ENCODE measurements at regions of chr9 and their contacts with region 1.

Region 1: DNA sequence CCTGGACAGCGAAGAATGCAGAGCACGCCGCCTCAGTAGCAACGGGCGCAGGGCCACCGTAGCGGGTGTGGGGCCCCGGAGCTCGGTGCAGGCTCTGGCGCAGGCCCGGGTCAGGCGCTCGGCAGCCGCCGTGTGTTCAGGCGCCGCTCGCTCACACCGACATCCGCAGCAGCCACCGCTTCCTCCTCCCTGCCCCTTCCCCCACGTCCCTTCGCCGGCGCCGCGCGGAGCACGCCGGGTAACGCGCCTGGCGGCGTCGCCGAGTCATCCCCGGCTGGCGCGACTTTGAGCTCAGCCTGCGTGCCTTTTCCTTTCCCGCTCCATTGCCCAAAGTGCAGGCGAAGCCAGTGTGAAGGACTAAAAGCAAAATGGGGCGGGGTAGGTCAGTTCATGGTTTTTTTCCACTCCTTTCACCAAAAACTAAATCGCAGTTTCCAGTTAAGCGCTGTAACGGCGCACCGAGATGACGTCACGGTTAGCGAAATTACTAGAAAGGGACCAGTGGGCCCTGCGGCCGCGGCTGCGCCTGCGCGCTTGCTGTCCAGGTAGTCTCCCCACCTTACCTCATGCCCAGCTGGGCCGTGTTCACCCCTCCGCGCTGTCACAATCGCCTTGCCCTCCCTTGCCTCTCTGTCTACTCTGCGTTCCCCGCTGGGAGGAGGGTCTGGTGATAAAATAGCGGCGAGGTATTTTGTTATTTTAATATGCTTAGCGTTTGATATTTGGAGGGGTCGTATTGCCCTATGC is at the start of gene UBQLN1:
- DNase-seq: peak; percentile 86 to 96 (median 93)
- H3K4me3 ChIP-seq: peak within 1 kb of the TSS; percentile 99
- H3K4me3 Mint-ChIP-seq: peak within 1 kb of the TSS; percentile 84 to 99 (median 98)
- H3K27ac ChIP-seq: peak within 1 kb of the TSS; percentile 99
- H3K27ac Mint-ChIP-seq: peak within 1 kb of the TSS; percentile 98 to 100 (median 100)
- H3K4me1 ChIP-seq: peaks cover 34% of the 10 kb centered on the region
- H3K4me1 Mint-ChIP-seq: peaks cover 36 to 53% (median 50%) of the 10 kb centered on the region in 3 donors
- H3K27me3 ChIP-seq: no peaks in the 10 kb centered on the region
- H3K27me3 Mint-ChIP-seq: no peaks in the 10 kb centered on the region
- total RNA-seq, gene UBQLN1: 95.1 to 101 TPM

Region 2: GRCh38 chr9:83583151-83584014 is 124.6 kb before region 1 on chr9:
- CTCF ChIA-PET with region 1: no interaction called
- POLR2A ChIA-PET with region 1: no interaction called
- DNase-seq: peak in 2 of 5 donors; percentile 14 to 16
- H3K4me3 ChIP-seq: no peak overlapping the region
- H3K4me3 Mint-ChIP-seq: no peak overlapping the region
- H3K27ac ChIP-seq: no peak overlapping the region
- H3K27ac Mint-ChIP-seq: peak overlapping the region in 1 of 8 donors; percentile 7
- H3K4me1 ChIP-seq: no peaks in the 10 kb centered on the region
- H3K4me1 Mint-ChIP-seq: no peaks in the 10 kb centered on the region
- H3K27me3 ChIP-seq: no peaks in the 10 kb centered on the region
- H3K27me3 Mint-ChIP-seq: no peaks in the 10 kb centered on the region

Region 3: GRCh38 chr9:83622939-83623678 is 84.8 kb before region 1 on chr9 and contains the start of gene IDNK:
- CTCF ChIA-PET with region 1: interaction called, 22 read pairs
- POLR2A ChIA-PET with region 1: interaction called, 22 read pairs
- DNase-seq: peak; percentile 49 to 76 (median 60)
- H3K4me3 ChIP-seq: peak within 1 kb of the TSS; percentile 72
- H3K4me3 Mint-ChIP-seq: peak within 1 kb of the TSS; percentile 87 to 98 (median 92)
- H3K27ac ChIP-seq: peak within 1 kb of the TSS; percentile 84
- H3K27ac Mint-ChIP-seq: peak within 1 kb of the TSS; percentile 90 to 99 (median 96)
- H3K4me1 ChIP-seq: peaks cover 18% of the 10 kb centered on the region
- H3K4me1 Mint-ChIP-seq: peaks cover 33 to 43% (median 36%) of the 10 kb centered on the region in 3 donors
- H3K27me3 ChIP-seq: no peaks in the 10 kb centered on the region
- H3K27me3 Mint-ChIP-seq: no peaks in the 10 kb centered on the region
- total RNA-seq, gene IDNK: 5.9 to 6.3 TPM

Region 4: DNA sequence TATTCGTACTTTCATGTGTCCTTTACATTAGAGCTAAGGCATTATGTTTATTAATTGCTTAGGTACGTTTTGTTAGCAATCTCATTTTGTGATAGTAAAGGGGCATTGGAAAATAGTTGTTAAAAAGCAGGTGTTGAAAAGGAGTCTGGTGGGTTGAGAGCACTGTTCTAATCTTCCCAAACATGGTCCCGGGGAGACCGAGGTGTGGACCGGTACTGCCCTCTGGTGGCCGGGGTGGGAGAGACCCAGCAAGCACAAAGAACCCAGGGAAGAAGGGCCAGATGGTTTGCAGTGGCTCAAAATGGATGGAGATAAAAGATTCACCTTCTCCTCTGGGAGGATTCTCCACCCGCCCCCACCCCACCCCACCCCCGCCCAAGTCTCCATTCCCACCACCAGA is 58.9 kb before region 1 on chr9:
- CTCF ChIA-PET with region 1: interaction called, 11 read pairs
- POLR2A ChIA-PET with region 1: no interaction called
- DNase-seq: peak; percentile 57 to 79 (median 65)
- H3K4me3 ChIP-seq: no peak overlapping the region
- H3K4me3 Mint-ChIP-seq: no peak overlapping the region
- H3K27ac ChIP-seq: no peak overlapping the region
- H3K27ac Mint-ChIP-seq: peak overlapping the region in 1 of 8 donors; percentile 24
- H3K4me1 ChIP-seq: no peaks in the 10 kb centered on the region
- H3K4me1 Mint-ChIP-seq: no peaks in the 10 kb centered on the region
- H3K27me3 ChIP-seq: no peaks in the 10 kb centered on the region
- H3K27me3 Mint-ChIP-seq: no peaks in the 10 kb centered on the region

Region 5: DNA sequence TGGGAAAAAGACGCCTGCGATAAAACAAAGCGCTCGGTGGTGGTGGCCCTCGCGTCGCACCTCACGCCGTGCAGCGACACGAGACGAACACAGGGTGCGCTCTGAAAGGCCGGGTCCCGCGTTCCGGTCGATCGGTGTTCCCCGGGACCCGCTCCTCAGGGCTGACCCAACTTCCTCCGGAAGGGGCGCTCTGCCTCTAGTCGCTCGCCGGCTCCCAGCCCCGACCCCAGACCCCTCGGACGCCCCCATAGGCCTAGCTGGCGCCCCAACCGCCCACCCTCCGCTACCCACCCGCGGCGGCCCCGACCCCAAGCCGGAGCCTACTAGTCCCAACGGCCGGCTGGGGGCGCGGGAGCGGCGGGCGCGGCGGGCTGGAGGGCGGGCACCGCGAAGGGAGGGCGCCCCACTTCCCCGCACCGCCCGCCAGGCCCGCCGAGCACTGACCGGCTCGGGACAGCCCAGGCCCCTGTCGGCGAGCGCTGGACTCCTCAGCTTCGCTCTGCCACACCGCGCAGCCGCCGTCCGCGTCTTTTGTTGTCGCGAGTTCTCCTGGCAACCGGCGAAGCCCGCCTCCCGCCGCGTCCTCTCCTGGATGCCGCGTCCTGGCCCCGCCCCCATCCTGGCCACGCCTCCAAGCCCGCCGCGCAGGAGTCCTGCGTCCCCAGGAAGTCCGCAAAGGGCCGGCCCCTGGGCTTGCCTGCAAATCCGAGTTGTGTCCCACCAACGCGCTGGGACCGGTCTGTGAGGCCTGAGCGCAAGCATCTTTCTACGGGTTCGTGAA is 213.2 kb after region 1 on chr9 and contains the start of gene KIF27:
- CTCF ChIA-PET with region 1: no interaction called
- POLR2A ChIA-PET with region 1: interaction called, 20 read pairs
- DNase-seq: peak; percentile 94 to 98 (median 95)
- H3K4me3 ChIP-seq: peak within 1 kb of the TSS; percentile 48
- H3K4me3 Mint-ChIP-seq: peak within 1 kb of the TSS; percentile 89 to 96 (median 92)
- H3K27ac ChIP-seq: peak within 1 kb of the TSS; percentile 87
- H3K27ac Mint-ChIP-seq: peak within 1 kb of the TSS; percentile 95 to 98 (median 97)
- H3K4me1 ChIP-seq: no peaks in the 10 kb centered on the region
- H3K4me1 Mint-ChIP-seq: peaks cover 14 to 25% (median 16%) of the 10 kb centered on the region in 3 donors
- H3K27me3 ChIP-seq: no peaks in the 10 kb centered on the region
- H3K27me3 Mint-ChIP-seq: no peaks in the 10 kb centered on the region
- total RNA-seq, gene KIF27: 2.8 to 3.2 TPM

Region 6: DNA sequence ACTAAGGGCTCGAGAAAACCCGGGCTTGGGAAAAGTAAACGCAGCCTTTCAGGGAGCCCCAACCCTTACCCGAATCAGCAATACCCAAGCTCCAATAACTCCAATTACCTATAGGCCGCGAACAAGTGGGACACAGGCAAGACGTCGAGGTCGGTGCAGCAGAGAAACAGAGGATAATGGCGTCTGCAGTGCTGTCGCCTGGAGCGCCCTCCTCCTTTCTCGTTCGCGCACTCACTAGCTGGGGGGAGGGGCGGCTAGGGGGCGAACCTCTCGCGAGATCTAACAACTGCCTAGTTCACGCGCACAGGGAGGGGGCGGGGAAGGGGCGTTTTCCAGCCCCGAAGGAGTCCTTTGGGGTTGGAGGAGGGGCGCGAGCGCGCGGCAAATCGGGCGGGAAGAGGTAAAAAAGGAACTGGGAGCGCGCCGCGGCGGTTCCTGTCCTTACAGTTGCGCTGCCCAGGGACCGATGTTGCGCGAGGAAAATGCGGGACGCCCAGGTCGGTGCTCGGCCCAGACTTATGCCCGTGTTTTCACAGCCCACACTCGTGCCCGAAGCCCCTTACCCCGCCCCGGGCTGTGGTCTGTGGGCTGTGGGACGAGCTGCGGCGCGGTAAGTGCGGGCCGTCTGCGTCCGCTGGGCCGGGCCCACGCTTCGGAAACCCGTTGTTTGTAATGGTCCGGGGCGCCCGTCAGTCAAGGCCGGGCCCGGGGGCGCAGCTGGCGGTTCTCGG is 272.6 kb after region 1 on chr9 and contains the start of gene RMI1:
- CTCF ChIA-PET with region 1: interaction called, 7 read pairs
- POLR2A ChIA-PET with region 1: interaction called, 28 read pairs
- DNase-seq: peak; percentile 98 to 100 (median 100)
- H3K4me3 ChIP-seq: peak within 1 kb of the TSS; percentile 82
- H3K4me3 Mint-ChIP-seq: peak within 1 kb of the TSS; percentile 91 to 100 (median 98)
- H3K27ac ChIP-seq: peak within 1 kb of the TSS; percentile 94
- H3K27ac Mint-ChIP-seq: peak within 1 kb of the TSS; percentile 97 to 99 (median 99)
- H3K4me1 ChIP-seq: peaks cover 35% of the 10 kb centered on the region
- H3K4me1 Mint-ChIP-seq: peaks cover 45 to 57% (median 52%) of the 10 kb centered on the region in 3 donors
- H3K27me3 ChIP-seq: no peaks in the 10 kb centered on the region
- H3K27me3 Mint-ChIP-seq: peaks cover 0 to 10% of the 10 kb centered on the region in 2 donors
- total RNA-seq, gene RMI1: 29.0 to 29.3 TPM

Measured in CD8-positive, alpha-beta memory T cell (primary cell).